Naive thymus-derived CD4-positive, alpha-beta T cell (primary cell): ENCODE measurements at regions of chr5 and their contacts with region 1.

Region 1: GRCh38 chr5:10418654-10419345 is 22.9 kb upstream of the ROPN1L start:
- DNase-seq: no peak
- ATAC-seq: no peak
- H3K4me3 ChIP-seq: no peak overlapping the region
- H3K4me3 Mint-ChIP-seq: peak overlapping the region in 1 of 10 donors; percentile 2
- H3K27ac ChIP-seq: no peak overlapping the region
- H3K27ac Mint-ChIP-seq: peak overlapping the region in 7 of 9 donors; percentile 9 to 74 (median 38)
- H3K4me1 ChIP-seq: peaks cover 0 to 21% of the 10 kb centered on the region in 2 donors
- H3K4me1 Mint-ChIP-seq: peaks cover 11 to 45% (median 35%) of the 10 kb centered on the region in 7 donors
- H3K27me3 ChIP-seq: no peaks in the 10 kb centered on the region
- H3K27me3 Mint-ChIP-seq: no peaks in the 10 kb centered on the region

Region 2: DNA sequence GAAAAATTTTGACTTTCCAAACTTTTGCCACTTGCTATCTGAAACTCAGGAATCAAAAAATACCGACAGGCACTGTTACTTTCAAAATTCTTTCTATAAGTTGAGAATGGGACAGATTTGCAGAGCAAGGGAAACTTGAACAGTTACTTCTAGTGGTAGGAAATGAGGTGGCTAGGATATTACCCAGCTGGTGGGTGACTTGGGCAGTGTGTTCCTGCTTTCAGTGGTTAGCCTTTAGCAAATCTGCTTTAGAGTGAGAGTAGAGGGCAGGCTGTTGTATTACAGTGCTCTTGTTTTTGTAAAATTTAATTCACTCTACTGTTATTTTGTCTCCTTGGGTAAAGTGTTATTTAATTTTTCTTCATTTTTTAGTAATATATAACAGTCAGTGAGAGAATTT is 17.3 kb before region 1 on chr5:
- CTCF ChIA-PET with region 1: interaction called, 3 read pairs
- POLR2A ChIA-PET with region 1: no interaction called
- intact Hi-C with region 1: loop called in 1 of 2 experiments (anchors 2 kb)
- DNase-seq: no peak
- ATAC-seq: no peak
- H3K4me3 ChIP-seq: no peak overlapping the region
- H3K4me3 Mint-ChIP-seq: no peak overlapping the region
- H3K27ac ChIP-seq: no peak overlapping the region
- H3K27ac Mint-ChIP-seq: peak overlapping the region in 2 of 9 donors; percentile 32 to 57
- H3K4me1 ChIP-seq: no peaks in the 10 kb centered on the region
- H3K4me1 Mint-ChIP-seq: peaks cover 0 to 8% (median 2%) of the 10 kb centered on the region in 7 donors
- H3K27me3 ChIP-seq: no peaks in the 10 kb centered on the region
- H3K27me3 Mint-ChIP-seq: no peaks in the 10 kb centered on the region